Sciatic nerve (tissue), 2 donors: ENCODE measurements at regions of chr12 and their contacts with region 1.

Region 1: DNA sequence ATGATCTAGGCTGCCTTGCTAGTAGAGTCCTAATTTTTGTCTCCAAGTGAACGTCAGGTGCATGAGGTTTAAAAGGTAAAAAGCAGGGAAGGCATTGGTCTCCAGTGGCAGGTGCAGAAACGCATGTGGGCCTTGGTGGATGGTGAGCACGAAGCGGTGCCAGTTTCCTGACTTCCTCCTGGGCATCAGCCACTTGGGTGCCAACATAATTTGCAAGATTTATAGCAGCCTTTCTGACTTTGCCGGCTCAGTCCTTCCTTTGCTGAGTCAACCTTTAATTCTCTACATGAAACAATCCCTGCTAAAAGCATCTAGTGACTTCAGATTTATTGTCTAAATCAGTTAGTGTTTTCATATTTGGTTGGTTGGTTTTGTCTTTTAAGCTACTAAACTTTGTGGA is 355.7 kb upstream of the TMEM132C start:
- DNase-seq: no peak
- ATAC-seq: no peak

Region 2: DNA sequence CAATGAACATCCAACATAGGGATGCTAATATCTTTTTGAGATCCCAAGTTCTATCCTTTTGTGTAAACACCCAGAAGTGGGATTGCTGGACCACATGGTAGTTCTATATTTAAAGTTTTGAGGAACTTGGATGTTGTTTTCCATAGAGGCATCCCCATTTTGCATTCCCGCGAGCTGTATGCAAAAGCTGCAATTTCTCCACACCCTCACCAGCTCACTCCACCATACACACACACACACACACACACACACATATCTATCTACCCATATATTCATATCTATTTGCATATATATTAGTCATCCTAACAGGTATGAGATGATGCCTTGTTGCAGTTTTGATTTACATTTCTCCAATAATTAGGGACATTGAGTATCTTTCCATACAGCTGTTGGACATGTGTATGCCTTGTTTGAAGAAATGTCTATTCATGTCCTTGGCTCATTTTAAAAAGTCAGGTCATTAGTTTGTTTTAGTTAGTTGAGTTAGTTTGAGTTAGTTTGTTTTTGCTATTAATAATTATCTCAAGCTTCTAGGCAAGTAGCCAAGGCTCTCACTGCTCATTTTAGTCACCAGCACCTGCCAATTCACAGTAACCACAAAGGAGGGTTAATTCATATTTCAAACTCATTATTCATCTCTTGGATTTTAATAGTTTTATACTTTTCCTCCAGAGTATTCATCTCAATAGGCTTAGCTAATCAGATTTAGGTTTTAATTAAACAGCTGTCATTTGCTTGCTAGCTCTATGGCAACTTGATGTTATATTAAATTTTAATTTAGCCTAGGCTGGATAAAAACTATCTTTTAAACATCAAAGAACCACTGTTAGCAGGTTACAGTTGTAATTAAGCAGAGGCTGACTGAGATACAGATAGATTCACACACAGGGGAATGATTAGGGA is 1080.3 kb before region 1 on chr12:
- intact Hi-C with region 1: loop called (anchors 10 kb)
- DNase-seq: no peak
- ATAC-seq: no peak

Region 3: GRCh38 chr12:127773520-127773919 is 137.8 kb before region 1 on chr12:
- intact Hi-C with region 1: no loop called
- DNase-seq: no peak
- ATAC-seq: peak; percentile 40

Region 4: DNA sequence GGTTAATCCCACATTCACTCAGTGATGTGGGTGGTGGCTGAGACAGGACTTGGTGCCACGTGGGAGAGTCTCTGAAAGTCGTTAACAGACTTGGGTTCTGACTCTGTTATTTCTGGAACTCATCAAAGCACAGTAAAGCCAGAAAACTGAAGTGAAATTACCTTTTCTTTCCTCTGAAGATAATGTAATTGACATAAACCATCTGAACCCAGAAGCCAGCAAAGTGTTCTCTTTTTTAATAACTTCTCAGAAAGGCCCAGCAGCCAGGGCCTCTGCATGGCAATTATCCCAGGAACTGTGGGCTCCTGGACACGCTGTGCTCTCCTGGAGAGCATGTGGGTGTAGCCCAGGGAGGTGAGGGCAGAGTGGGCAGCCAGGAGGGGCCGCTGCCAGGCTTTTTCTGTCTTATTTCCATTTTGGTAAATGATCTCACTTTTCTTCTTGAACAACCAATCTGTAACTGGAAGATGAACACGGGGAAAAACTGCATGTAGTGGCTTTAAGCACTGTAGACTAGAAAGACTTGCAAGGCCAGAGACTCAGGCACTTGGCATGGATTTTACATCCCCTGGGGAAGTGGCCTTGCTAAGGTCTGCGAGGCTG is 88.4 kb before region 1 on chr12:
- intact Hi-C with region 1: no loop called
- DNase-seq: no peak
- ATAC-seq: peak; percentile 95

Region 5: DNA sequence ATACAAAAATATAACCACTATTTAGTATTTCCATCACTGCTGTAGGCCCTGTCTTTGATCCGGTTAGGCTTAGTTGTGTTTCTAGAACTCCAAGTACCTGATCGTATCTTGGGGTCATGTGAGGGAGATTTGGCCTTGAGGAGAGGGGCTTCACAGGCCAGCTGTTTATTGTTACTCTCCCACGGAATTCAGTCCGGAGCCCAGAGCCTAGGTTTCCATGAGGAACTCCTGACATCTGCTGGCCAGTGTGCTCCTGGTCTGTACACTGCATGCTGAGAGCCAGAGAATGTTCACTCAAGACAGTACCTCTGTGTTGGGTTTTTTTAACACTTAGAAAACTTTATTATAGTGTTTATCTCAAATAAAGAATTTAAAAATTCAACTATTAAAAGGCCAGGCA is 14.7 kb after region 1 on chr12:
- intact Hi-C with region 1: no loop called
- DNase-seq: no peak
- ATAC-seq: peak; percentile 92